ENCODE measurements at regions of chr4 and their contacts with region 1.

Region 1: DNA sequence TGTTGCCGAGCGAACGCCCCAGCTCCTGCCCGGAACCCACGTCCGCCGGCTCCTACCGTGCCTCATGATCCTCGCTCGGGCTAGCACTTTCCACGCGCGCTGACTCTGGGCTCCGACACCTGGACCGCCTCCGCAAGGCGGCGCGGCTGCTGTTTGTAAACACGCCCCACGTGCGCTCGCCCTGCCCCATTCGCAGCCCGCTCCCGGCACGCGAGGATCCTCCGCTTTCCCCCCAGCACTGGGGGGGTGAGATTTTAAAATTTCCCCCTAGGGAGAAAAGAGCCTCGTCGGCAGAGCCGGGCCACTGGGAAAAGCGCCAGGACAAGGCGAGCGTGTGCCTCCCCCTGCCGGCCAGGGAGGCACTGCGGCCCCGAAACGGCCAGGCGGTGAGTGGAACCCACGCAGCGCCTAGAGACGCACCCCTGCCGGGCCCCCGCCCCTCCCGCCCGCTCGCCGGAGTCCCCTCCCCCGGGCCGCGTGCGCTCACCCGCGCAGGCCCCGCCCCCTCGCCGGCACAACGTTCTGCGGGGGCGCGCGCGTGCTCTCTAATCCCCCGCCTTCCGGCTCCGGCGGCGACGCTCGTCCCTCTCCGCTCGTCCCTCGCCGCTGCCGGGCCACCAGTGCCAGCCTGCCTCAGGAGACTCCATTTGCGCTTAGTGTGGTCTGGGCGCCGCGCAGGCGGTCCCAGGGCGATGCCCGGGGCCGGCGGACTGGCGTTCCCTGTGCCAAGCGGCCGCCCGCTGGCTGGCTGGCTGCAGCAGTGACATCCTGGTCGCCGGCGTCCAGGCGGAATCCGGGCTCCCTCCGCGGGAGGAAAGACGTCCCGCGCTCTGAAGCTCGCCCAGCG is at the start of gene TIGD2:
- DNase-seq: peak; percentile 93 to 96 (median 95)
- ATAC-seq: peak; percentile 95
- H3K4me3 ChIP-seq: peak within 1 kb of the TSS; percentile 80
- H3K27ac ChIP-seq: peak within 1 kb of the TSS; percentile 90
- H3K4me1 ChIP-seq: peaks cover 8 to 11% of the 10 kb centered on the region in 2 experiments; a peak in 4 of 5 replicates
- H3K27me3 ChIP-seq: peaks cover 3 to 12% of the 10 kb centered on the region in 2 experiments; a peak in 3 of 5 replicates
- CTCF ChIP-seq: peak; percentile 74 to 82 (median 81)
- EP300 ChIP-seq: no peak
- POLR2A ChIP-seq: peak; percentile 91
- RAD21 ChIP-seq: peak; percentile 50 to 68
- polyA plus RNA-seq, gene TIGD2: 3.6 to 3.8 TPM

Region 2: GRCh38 chr4:88523325-88524129 is 587.7 kb before region 1 on chr4 and contains the start of gene PYURF:
- CTCF ChIA-PET with region 1: no interaction called
- POLR2A ChIA-PET with region 1: no interaction called
- in situ Hi-C with region 1: no loop called
- intact Hi-C with region 1: loop called (anchors 10 kb)
- DNase-seq: peak; percentile 90 to 96 (median 90)
- ATAC-seq: peak; percentile 95
- H3K4me3 ChIP-seq: peak within 1 kb of the TSS; percentile 85
- H3K27ac ChIP-seq: peak within 1 kb of the TSS; percentile 79
- H3K4me1 ChIP-seq: peaks cover 7 to 12% of the 10 kb centered on the region in 2 experiments; a peak in 3 of 5 replicates
- H3K27me3 ChIP-seq: no peaks in the 10 kb centered on the region
- CTCF ChIP-seq: no peak
- EP300 ChIP-seq: peak; percentile 24; the same call in 1 of the 2 replicates
- POLR2A ChIP-seq: peak; percentile 92
- RAD21 ChIP-seq: no peak
- polyA plus RNA-seq, gene PYURF: 22.5 to 42.8 TPM

Region 3: GRCh38 chr4:88823058-88823919 is 287.9 kb before region 1 on chr4:
- CTCF ChIA-PET with region 1: no interaction called
- POLR2A ChIA-PET with region 1: interaction called, 3 read pairs
- in situ Hi-C with region 1: no loop called
- intact Hi-C with region 1: loop called (anchors 2 kb)
- DNase-seq: peak; percentile 74 to 92 (median 83)
- ATAC-seq: peak; percentile 95
- H3K4me3 ChIP-seq: peak overlapping the region; percentile 39
- H3K27ac ChIP-seq: peak overlapping the region; percentile 96
- H3K4me1 ChIP-seq: peaks cover 0 to 4% of the 10 kb centered on the region in 2 experiments; a peak in 2 of 5 replicates
- H3K27me3 ChIP-seq: no peaks in the 10 kb centered on the region
- CTCF ChIP-seq: no peak
- EP300 ChIP-seq: peak; percentile 37; the same call in 1 of the 2 replicates
- POLR2A ChIP-seq: peak; percentile 59
- RAD21 ChIP-seq: no peak

Region 4: GRCh38 chr4:88880501-88881226 is 230.5 kb before region 1 on chr4:
- CTCF ChIA-PET with region 1: no interaction called
- POLR2A ChIA-PET with region 1: no interaction called
- in situ Hi-C with region 1: no loop called
- intact Hi-C with region 1: loop called (anchors 10 kb)
- DNase-seq: peak in 1 of 4 experiments; percentile 30
- ATAC-seq: peak; percentile 71
- H3K4me3 ChIP-seq: no peak overlapping the region
- H3K27ac ChIP-seq: peak overlapping the region; percentile 54; the same call in 1 of the 3 replicates
- H3K4me1 ChIP-seq: peaks cover 0 to 14% of the 10 kb centered on the region in 2 experiments; a peak in 4 of 5 replicates
- H3K27me3 ChIP-seq: no peaks in the 10 kb centered on the region
- CTCF ChIP-seq: no peak
- EP300 ChIP-seq: no peak
- POLR2A ChIP-seq: no peak
- RAD21 ChIP-seq: no peak

Region 5: DNA sequence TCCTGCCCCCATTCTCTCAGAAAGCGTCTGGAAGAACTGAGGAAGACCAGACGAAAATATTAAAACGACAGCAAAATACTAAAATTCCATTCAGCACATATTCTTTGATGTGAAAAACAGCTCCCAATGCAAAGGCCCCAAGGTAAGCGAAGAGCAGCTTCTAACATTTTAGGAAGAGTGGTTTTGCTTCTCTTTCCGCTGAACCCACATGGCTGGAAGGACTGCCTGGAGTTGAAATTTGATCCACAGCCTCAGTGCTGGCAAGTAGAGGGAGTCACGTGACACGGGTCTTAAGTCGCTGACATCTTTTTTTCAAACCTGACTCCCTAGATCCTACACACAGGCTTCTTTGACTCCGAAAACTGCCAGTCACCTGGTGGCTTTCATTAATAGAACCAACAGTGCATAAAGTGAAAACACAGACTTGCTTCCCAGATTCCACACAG is 54.2 kb before region 1 on chr4 and contains the start of gene FAM13A:
- CTCF ChIA-PET with region 1: interaction called, 3 read pairs
- POLR2A ChIA-PET with region 1: no interaction called
- in situ Hi-C with region 1: no loop called
- intact Hi-C with region 1: loop called (anchors 2 kb)
- DNase-seq: peak; percentile 74 to 96 (median 78)
- ATAC-seq: peak; percentile 90
- H3K4me3 ChIP-seq: peak within 1 kb of the TSS; percentile 59
- H3K27ac ChIP-seq: peak within 1 kb of the TSS; percentile 79
- H3K4me1 ChIP-seq: peaks cover 4 to 17% of the 10 kb centered on the region in 2 experiments; a peak in 2 of 5 replicates
- H3K27me3 ChIP-seq: no peaks in the 10 kb centered on the region
- CTCF ChIP-seq: no peak
- EP300 ChIP-seq: no peak
- POLR2A ChIP-seq: peak; percentile 88
- RAD21 ChIP-seq: no peak
- polyA plus RNA-seq, gene FAM13A: 14.4 to 15.3 TPM

Measured in K562 (cell line).